SK-N-SH (cell line): ENCODE measurements at regions of chr7 and their contacts with region 1.

Region 1: DNA sequence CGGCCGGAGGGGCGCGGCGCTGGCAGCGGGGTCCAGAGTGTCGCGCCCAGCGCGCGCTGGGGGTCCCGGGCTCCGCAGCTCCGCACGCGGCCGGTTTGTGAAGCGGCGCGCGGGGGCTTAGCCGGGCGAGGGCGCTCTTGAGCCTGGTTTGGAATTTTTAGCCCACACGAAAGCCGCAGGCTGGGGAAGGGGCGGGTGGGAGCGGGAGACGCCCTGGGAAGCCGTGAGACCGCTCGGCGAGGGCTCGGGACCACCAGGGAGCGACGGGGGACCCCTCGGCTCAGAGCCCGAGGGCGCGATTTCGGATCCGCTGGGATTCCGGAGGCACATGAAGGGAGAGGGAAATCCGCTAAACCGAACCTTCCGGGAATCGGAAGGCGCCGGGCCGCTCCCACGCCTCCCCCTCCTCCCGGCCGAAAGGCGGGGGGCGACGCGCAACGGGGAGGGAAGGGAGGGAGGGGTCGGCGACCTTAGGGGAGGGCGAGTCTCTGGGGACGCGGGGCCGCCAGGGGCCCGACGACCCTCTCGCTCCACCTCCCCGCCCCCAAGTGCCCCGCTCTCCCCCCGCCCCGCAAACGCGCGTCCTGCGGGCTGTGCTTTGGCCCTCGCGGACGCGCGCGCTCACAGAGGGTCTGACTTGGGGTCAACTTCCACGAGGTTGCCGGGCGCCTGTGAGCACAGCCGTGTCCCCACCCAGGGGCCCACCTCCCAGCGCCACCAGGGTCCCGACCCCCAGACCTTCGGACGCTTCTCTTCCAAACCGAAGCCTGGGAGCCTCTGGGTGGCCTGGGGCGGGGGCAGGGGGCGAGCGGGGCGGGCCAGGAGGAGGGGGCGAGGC is 5.1 kb upstream of the ELFN1 start:
- DNase-seq: peak; percentile 99
- H3K4me3 ChIP-seq: peak overlapping the region; percentile 55 to 66
- H3K27ac ChIP-seq: peak overlapping the region in 1 of 2 experiments; percentile 91; a peak in 2 of 4 replicates
- H3K4me1 ChIP-seq: peaks cover 0 to 32% of the 10 kb centered on the region in 2 experiments; a peak in 1 of 4 replicates
- H3K27me3 ChIP-seq: peaks cover 55% of the 10 kb centered on the region
- CTCF ChIP-seq: peak; percentile 86
- EP300 ChIP-seq: no peak
- RAD21 ChIP-seq: peak; percentile 85

Region 2: DNA sequence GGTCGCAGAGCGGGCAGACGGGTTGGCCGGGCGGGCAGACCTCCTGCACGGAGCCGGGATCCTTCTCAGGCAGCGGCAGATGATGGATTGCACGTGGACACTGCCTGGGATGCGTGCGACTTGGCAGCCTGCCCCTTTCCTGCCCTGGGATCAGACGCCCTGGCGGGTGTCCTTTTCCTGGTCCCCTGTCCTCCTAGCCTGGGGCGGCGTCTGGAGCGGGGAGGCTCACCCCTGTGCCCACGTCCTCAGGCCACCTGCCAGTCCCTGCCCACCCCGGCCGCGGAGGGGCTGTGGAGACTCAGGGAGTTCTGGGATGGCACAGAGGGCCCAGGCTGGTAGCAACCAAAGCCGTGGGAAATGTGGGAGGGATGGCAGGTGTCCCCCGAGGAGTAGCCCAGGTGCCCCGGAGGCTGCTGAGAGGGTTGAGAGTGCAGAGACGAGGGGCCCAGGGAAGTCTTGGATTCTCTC is 77.8 kb before region 1 on chr7:
- CTCF ChIA-PET with region 1: interaction called, 12 read pairs
- POLR2A ChIA-PET with region 1: interaction called, 3 read pairs
- DNase-seq: peak; percentile 97
- H3K4me3 ChIP-seq: no peak overlapping the region; a peak in 1 of 4 replicates
- H3K27ac ChIP-seq: peak overlapping the region in 1 of 2 experiments; percentile 95; a peak in 2 of 4 replicates
- H3K4me1 ChIP-seq: peaks cover 0 to 57% of the 10 kb centered on the region in 2 experiments; a peak in 1 of 4 replicates
- H3K27me3 ChIP-seq: peaks cover 18% of the 10 kb centered on the region; the same call in 1 of the 2 replicates
- CTCF ChIP-seq: no peak
- EP300 ChIP-seq: peak in 1 of 2 experiments; percentile 90; a peak in 2 of 4 replicates
- RAD21 ChIP-seq: peak; percentile 26

Region 3: GRCh38 chr7:1646957-1647891 is 17.7 kb before region 1 on chr7:
- CTCF ChIA-PET with region 1: interaction called, 28 read pairs
- POLR2A ChIA-PET with region 1: no interaction called
- DNase-seq: peak; percentile 53
- H3K4me3 ChIP-seq: no peak overlapping the region
- H3K27ac ChIP-seq: peak overlapping the region in 1 of 2 experiments; percentile 97; a peak in 2 of 4 replicates
- H3K4me1 ChIP-seq: peaks cover 0 to 76% of the 10 kb centered on the region in 2 experiments; a peak in 1 of 4 replicates
- H3K27me3 ChIP-seq: peaks cover 29% of the 10 kb centered on the region
- CTCF ChIP-seq: no peak
- EP300 ChIP-seq: no peak
- RAD21 ChIP-seq: no peak

Region 4: DNA sequence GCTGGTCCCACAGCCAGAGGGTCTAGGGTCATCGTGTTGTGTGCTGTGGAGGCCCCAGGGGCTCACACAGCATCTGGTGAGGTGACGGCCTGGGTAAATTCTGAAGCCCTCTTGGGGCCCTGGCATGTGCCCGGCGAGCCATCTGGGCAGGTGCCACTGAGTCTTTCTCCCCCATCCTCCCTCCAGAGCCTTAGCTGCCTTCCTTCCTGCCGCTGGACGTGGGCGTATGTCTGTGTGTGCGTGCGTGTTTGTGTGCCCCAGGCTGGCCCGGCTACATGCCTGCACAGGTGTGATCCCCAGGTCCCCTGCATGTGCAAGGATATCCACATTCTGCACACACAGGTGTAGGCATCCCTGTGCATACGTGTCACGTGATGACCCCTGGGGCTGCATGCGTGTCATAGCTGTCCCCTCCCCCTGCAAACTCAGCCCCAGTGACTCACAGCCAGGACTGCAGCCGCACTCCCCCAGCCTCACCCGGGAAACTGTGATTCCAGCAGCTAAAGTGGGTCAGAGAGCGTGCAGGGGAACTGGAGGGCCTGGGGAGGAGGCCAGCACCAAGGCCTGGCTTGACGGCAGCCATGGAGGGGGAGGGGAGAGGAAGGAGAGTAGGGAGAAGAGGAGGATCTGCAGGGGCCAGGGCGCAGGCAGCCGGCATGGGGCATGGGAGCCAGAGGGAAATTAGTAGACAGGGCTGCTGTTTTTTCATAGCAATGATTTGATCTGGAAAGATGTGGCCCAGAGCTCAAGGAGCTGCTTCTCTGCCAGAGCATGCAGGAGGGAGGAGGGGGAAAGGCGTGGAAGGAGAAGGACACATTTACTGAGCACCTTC is 51.5 kb after region 1 on chr7:
- CTCF ChIA-PET with region 1: interaction called, 14 read pairs
- POLR2A ChIA-PET with region 1: no interaction called
- DNase-seq: peak; percentile 86
- H3K4me3 ChIP-seq: no peak overlapping the region; a peak in 1 of 4 replicates
- H3K27ac ChIP-seq: peak overlapping the region in 1 of 2 experiments; percentile 67; a peak in 2 of 4 replicates
- H3K4me1 ChIP-seq: peaks cover 0 to 64% of the 10 kb centered on the region in 2 experiments; a peak in 2 of 4 replicates
- H3K27me3 ChIP-seq: no peaks in the 10 kb centered on the region; the same call in 1 of the 2 replicates
- CTCF ChIP-seq: no peak
- EP300 ChIP-seq: no peak
- RAD21 ChIP-seq: no peak; the same call in 1 of the 2 replicates

Region 5: GRCh38 chr7:2209146-2209960 is 544.4 kb after region 1 on chr7:
- CTCF ChIA-PET with region 1: interaction called, 17 read pairs
- POLR2A ChIA-PET with region 1: no interaction called
- DNase-seq: peak; percentile 95
- H3K4me3 ChIP-seq: no peak overlapping the region
- H3K27ac ChIP-seq: peak overlapping the region in 1 of 2 experiments; percentile 2; a peak in 1 of 4 replicates
- H3K4me1 ChIP-seq: peaks cover 0 to 20% of the 10 kb centered on the region in 2 experiments; a peak in 2 of 4 replicates
- H3K27me3 ChIP-seq: no peaks in the 10 kb centered on the region
- CTCF ChIP-seq: peak; percentile 90
- EP300 ChIP-seq: no peak
- RAD21 ChIP-seq: peak; percentile 95